Adrenal gland (tissue), 19 donors: ENCODE measurements at regions of chr2 and their contacts with region 1.

Region 1: DNA sequence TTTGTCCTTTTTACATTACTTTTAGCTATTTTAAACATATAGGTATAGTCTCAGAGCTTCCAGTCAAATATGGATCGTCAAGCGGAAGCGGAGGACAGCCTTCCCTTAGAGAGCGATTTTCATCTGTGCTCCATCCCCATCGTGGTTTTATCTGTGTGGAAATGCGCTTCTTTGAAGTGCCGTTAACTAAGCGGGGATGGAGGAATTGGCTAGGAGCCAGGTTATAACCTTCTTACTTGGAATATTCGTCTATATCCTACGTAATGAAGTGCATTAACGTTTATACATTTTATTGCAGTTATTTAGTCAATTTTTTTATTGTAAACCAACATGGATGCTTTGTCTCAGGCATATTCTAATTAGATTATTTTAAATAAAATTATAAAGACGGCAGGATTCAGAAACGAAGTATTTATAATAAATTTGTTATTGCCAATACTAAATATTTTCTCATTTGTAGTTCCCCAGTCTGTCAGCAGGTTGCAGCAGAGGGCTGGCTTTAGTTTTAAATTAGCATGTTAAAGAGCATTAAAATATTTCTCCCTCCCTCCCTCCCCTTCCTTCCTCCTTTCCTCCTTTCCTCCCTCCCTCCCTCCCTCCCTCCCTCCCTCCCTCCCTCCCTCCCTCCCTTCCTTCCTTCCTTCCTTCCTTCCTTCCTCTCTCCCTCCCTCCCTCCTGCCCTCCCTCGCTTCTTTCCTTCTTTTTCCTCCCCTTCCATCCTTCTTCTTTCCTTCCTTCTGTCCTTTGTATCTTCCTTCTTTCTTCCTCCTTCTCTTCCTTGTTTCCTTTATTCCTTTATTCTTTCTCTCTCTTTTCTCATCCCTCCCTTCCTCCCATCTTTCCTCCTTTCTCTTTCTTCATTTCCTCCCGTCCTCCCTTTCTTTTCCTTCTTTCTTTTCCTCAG is 80.6 kb upstream of the DOCK10 start:
- DNase-seq: peak in 4 of 7 donors; percentile 15 to 59 (median 20)
- H3K4me3 ChIP-seq: no peak overlapping the region
- H3K27ac ChIP-seq: no peak overlapping the region
- H3K4me1 ChIP-seq: no peaks in the 10 kb centered on the region
- H3K27me3 ChIP-seq: peaks cover 6% of the 10 kb centered on the region
- CTCF ChIP-seq: peak; percentile 31 to 53 (median 38)
- POLR2A ChIP-seq: no peak

Region 2: DNA sequence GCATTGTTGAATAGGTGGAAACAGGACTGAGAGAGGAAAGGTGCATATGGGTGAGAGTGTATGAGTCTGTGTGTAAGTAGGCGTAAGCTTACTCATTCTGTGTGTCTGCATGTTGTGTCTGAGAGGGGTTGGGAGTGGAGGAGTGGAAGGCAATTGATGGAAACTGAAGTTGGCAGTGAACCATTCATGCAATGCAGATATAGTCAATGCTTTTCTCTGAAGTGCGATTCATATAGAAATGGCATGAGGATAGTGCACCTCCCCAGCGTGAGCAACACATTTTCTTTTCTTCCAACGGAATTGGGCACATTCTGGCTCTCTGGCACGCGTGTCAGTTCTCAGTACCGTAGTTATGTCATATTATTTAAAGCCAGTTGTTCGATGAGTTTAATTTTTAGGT is 527.2 kb after region 1 on chr2:
- intact Hi-C with region 1: loop called (anchors 5 to 10 kb)
- DNase-seq: no peak
- H3K4me3 ChIP-seq: no peak overlapping the region
- H3K27ac ChIP-seq: no peak overlapping the region
- H3K4me1 ChIP-seq: no peaks in the 10 kb centered on the region
- H3K27me3 ChIP-seq: no peaks in the 10 kb centered on the region
- CTCF ChIP-seq: no peak
- POLR2A ChIP-seq: no peak

Region 3: GRCh38 chr2:225660262-225661131 is 537.7 kb after region 1 on chr2:
- intact Hi-C with region 1: loop called (anchors 5 to 10 kb)
- DNase-seq: peak; percentile 53 to 92 (median 80)
- H3K4me3 ChIP-seq: no peak overlapping the region
- H3K27ac ChIP-seq: no peak overlapping the region
- H3K4me1 ChIP-seq: no peaks in the 10 kb centered on the region
- H3K27me3 ChIP-seq: no peaks in the 10 kb centered on the region
- CTCF ChIP-seq: peak; percentile 67 to 91 (median 80)
- POLR2A ChIP-seq: no peak